ENCODE measurements at regions of chr10 and their contacts with region 1.

Region 1: GRCh38 chr10:34994565-34995142 is 95.5 kb downstream of the CUL2 start:
- DNase-seq: peak; percentile 88
- H3K4me3 Mint-ChIP-seq: no peak overlapping the region
- H3K27ac Mint-ChIP-seq: peak overlapping the region; percentile 77
- H3K4me1 Mint-ChIP-seq: peaks cover 18% of the 10 kb centered on the region
- H3K27me3 Mint-ChIP-seq: no peaks in the 10 kb centered on the region

Region 2: DNA sequence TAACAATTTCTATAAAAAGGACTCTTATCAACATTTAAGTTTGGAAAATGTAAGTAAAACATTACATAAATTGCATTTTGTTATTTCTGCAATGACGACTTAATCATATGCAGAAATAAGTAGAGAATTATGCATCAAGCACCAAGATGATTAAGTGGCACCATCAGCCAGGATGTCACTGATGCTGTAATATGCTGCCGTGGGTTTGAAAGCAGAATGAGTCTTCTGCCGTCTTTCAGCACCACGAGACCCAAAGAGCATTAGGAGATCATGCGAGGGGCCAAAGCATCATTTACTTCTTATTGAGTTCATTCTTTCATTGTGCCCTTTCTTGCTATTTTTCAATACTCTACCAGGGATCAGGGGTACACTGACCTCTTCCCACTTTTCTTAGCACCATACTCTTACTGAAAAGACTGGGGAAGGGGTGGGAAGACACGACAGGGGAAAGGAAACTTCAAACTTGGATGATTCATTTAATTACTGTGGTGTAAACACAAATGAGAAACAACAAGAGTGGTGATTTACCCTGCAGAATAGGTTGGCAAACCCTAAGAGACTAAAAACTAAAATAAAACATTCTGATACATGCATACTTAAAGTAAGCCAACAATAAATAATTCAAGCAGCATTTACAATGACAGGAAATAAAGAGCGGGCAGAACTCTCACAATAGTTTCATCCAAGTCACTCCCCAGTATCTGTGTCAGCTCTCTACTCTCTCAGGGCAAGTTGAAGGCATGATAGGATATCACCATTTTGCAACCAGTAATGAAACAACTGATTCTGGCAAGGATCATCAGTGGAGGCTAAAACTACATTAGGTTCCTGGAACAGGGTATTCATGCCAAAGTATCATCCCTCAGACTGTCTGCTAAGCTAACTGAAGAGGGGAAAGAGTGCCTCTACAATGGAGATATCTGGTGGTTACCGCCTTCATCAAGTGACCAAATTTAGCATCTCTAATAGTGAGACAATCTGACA is 24.7 kb after region 1 on chr10:
- intact Hi-C with region 1: loop called (anchors 2 kb)
- DNase-seq: no peak
- H3K4me3 Mint-ChIP-seq: no peak overlapping the region
- H3K27ac Mint-ChIP-seq: peak overlapping the region; percentile 67
- H3K4me1 Mint-ChIP-seq: peaks cover 12% of the 10 kb centered on the region
- H3K27me3 Mint-ChIP-seq: no peaks in the 10 kb centered on the region

Region 3: GRCh38 chr10:35090162-35090954 is 95.7 kb after region 1 on chr10 and contains the start of gene CUL2:
- intact Hi-C with region 1: loop called (anchors 1 kb)
- DNase-seq: peak; percentile 98
- H3K4me3 Mint-ChIP-seq: peak within 1 kb of the TSS; percentile 84
- H3K27ac Mint-ChIP-seq: peak within 1 kb of the TSS; percentile 97
- H3K4me1 Mint-ChIP-seq: peaks cover 40% of the 10 kb centered on the region
- H3K27me3 Mint-ChIP-seq: peaks cover 5% of the 10 kb centered on the region
- total RNA-seq, gene CUL2: 50.2 and 50.4 TPM in 2 replicates